ENCODE measurements at regions of chr19 and their contacts with region 1.

Region 1: DNA sequence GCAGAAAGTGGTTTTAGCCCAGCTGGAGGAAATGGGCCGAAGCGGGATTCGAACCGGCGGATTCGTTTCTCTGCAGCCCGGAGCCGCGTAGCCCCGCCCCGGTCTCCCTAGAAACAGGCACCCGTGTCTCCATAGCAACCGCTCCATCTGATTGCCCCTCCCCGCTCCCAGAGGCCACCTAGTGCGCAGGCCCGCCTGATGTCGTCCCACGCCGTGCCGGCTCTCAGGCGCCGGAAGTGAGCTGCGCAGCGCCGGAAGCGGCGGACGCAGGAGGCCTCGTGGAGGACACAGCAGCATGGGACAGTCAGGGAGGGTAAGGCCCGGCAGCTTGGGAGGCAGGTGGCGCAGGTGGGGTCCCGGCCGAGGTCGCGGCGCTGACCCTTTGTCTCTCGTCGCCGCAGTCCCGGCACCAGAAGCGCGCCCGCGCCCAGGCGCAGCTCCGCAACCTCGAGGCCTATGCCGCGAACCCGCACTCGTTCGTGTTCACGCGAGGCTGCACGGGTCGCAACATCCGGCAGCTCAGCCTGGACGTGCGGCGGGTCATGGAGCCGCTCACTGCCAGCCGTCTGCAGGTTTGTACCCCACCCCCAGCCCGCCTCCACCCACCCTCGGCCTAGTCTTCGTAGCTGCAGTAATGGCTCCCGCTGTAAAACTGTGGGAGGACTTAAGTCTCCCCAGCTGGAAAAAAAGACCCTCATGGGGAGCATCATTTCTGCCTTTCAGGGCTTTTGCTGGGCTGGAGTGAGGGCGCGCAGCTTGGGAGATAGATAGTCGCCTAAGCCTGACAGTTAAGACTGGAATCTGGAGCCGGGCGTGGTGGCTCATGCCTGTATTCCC is at the start of gene PPAN:
- DNase-seq: peak; percentile 98
- ATAC-seq: peak; percentile 60
- H3K4me3 ChIP-seq: peak within 1 kb of the TSS; percentile 4 to 71 (median 69)
- H3K4me3 Mint-ChIP-seq: peak within 1 kb of the TSS; percentile 92
- H3K27ac ChIP-seq: peak within 1 kb of the TSS; percentile 97 to 99
- H3K27ac Mint-ChIP-seq: peak within 1 kb of the TSS; percentile 99
- H3K4me1 ChIP-seq: peaks cover 53 to 73% of the 10 kb centered on the region in 2 donors
- H3K4me1 Mint-ChIP-seq: peaks cover 58% of the 10 kb centered on the region
- H3K27me3 ChIP-seq: no peaks in the 10 kb centered on the region
- H3K27me3 Mint-ChIP-seq: no peaks in the 10 kb centered on the region
- CTCF ChIP-seq: no peak
- total RNA-seq, gene PPAN: 80.5 and 88.0 TPM in 2 replicates

Region 2: GRCh38 chr19:10010247-10010691 is 96.0 kb before region 1 on chr19 and contains the start of gene COL5A3:
- CTCF ChIA-PET with region 1: no interaction called
- POLR2A ChIA-PET with region 1: no interaction called
- intact Hi-C with region 1: no loop called
- DNase-seq: no peak
- ATAC-seq: no peak
- H3K4me3 ChIP-seq: no peak within 1 kb of the TSS
- H3K4me3 Mint-ChIP-seq: peak within 1 kb of the TSS; percentile 3
- H3K27ac ChIP-seq: no peak within 1 kb of the TSS
- H3K27ac Mint-ChIP-seq: peak within 1 kb of the TSS; percentile 3
- H3K4me1 ChIP-seq: peaks cover 0 to 9% of the 10 kb centered on the region in 2 donors
- H3K4me1 Mint-ChIP-seq: peaks cover 4% of the 10 kb centered on the region
- H3K27me3 ChIP-seq: peaks cover 0 to 66% (median 16%) of the 10 kb centered on the region in 4 experiments
- H3K27me3 Mint-ChIP-seq: peaks cover 59% of the 10 kb centered on the region
- CTCF ChIP-seq: no peak
- total RNA-seq, gene COL5A3: not detected in 2 replicates

Region 3: GRCh38 chr19:10085641-10086590 is 20.4 kb before region 1 on chr19 and contains the start of gene SHFL:
- CTCF ChIA-PET with region 1: no interaction called
- POLR2A ChIA-PET with region 1: interaction called, 8 read pairs
- intact Hi-C with region 1: loop called (anchors 1 kb)
- DNase-seq: peak; percentile 91
- ATAC-seq: peak; percentile 97
- H3K4me3 ChIP-seq: peak within 1 kb of the TSS; percentile 50 to 99 (median 96)
- H3K4me3 Mint-ChIP-seq: peak within 1 kb of the TSS; percentile 89
- H3K27ac ChIP-seq: peak within 1 kb of the TSS; percentile 70 to 80
- H3K27ac Mint-ChIP-seq: peak within 1 kb of the TSS; percentile 82
- H3K4me1 ChIP-seq: peaks cover 6 to 16% of the 10 kb centered on the region in 2 donors
- H3K4me1 Mint-ChIP-seq: peaks cover 16% of the 10 kb centered on the region
- H3K27me3 ChIP-seq: no peaks in the 10 kb centered on the region
- H3K27me3 Mint-ChIP-seq: no peaks in the 10 kb centered on the region
- CTCF ChIP-seq: no peak
- total RNA-seq, gene SHFL: 95.8 and 109 TPM in 2 replicates

Region 4: DNA sequence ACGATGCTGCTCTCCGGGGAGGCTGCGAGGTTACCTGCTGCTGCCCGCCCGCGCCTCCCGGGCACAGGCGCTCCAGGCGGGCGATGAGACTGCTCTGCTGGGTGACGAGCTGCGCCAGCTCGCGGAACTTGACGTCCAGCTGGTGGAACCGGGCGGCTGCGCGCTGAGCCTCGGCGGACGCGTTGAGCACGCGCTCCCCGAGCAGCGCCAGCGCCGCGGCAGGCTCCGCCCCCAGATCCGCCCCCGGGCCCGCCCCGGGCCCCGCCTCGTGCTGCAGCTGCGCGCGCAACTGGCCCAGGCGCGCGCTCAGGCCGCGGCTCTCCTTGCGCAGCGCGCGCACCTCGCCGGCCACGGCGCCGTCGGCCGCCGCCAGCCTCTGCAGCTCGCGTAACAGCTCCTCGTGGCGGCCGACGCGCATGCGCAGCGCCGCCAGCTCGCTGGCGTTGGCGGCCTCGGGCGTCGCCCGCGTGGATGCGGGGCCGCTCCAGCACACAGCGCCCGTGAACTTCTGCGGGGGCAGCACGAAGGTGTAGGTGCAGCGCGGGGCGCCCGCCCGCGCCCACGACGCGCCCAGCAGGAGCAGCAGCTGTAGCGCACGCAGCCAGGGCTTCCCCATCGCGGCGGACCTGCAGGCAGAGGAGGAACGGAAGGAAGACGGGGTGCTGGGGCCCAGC is 10.2 kb before region 1 on chr19:
- CTCF ChIA-PET with region 1: interaction called, 263 read pairs
- POLR2A ChIA-PET with region 1: interaction called, 62 read pairs
- intact Hi-C with region 1: loop called (anchors 1 kb)
- DNase-seq: peak; percentile 96
- ATAC-seq: peak; percentile 91
- H3K4me3 ChIP-seq: peak overlapping the region in 4 of 5 experiments; percentile 40 to 55 (median 50)
- H3K4me3 Mint-ChIP-seq: peak overlapping the region; percentile 69
- H3K27ac ChIP-seq: peak overlapping the region; percentile 62 to 74
- H3K27ac Mint-ChIP-seq: peak overlapping the region; percentile 67
- H3K4me1 ChIP-seq: peaks cover 27 to 49% of the 10 kb centered on the region in 2 donors
- H3K4me1 Mint-ChIP-seq: peaks cover 39% of the 10 kb centered on the region
- H3K27me3 ChIP-seq: no peaks in the 10 kb centered on the region
- H3K27me3 Mint-ChIP-seq: no peaks in the 10 kb centered on the region
- CTCF ChIP-seq: no peak

Region 5: GRCh38 chr19:10120538-10121189 is 14.3 kb after region 1 on chr19:
- CTCF ChIA-PET with region 1: interaction called, 263 read pairs
- POLR2A ChIA-PET with region 1: interaction called, 62 read pairs
- intact Hi-C with region 1: loop called (anchors 1 kb)
- DNase-seq: no peak
- ATAC-seq: no peak
- H3K4me3 ChIP-seq: no peak overlapping the region
- H3K4me3 Mint-ChIP-seq: peak overlapping the region; percentile 37
- H3K27ac ChIP-seq: no peak overlapping the region
- H3K27ac Mint-ChIP-seq: no peak overlapping the region
- H3K4me1 ChIP-seq: peaks cover 9 to 19% of the 10 kb centered on the region in 2 donors
- H3K4me1 Mint-ChIP-seq: peaks cover 31% of the 10 kb centered on the region
- H3K27me3 ChIP-seq: no peaks in the 10 kb centered on the region
- H3K27me3 Mint-ChIP-seq: no peaks in the 10 kb centered on the region
- CTCF ChIP-seq: no peak

Region 6: GRCh38 chr19:10206226-10206885 is 100.0 kb after region 1 on chr19:
- CTCF ChIA-PET with region 1: no interaction called
- POLR2A ChIA-PET with region 1: interaction called, 11 read pairs
- intact Hi-C with region 1: no loop called
- DNase-seq: no peak
- ATAC-seq: no peak
- H3K4me3 ChIP-seq: no peak overlapping the region
- H3K4me3 Mint-ChIP-seq: no peak overlapping the region
- H3K27ac ChIP-seq: no peak overlapping the region
- H3K27ac Mint-ChIP-seq: no peak overlapping the region
- H3K4me1 ChIP-seq: no peaks in the 10 kb centered on the region
- H3K4me1 Mint-ChIP-seq: no peaks in the 10 kb centered on the region
- H3K27me3 ChIP-seq: no peaks in the 10 kb centered on the region
- H3K27me3 Mint-ChIP-seq: no peaks in the 10 kb centered on the region
- CTCF ChIP-seq: no peak

Region 7: DNA sequence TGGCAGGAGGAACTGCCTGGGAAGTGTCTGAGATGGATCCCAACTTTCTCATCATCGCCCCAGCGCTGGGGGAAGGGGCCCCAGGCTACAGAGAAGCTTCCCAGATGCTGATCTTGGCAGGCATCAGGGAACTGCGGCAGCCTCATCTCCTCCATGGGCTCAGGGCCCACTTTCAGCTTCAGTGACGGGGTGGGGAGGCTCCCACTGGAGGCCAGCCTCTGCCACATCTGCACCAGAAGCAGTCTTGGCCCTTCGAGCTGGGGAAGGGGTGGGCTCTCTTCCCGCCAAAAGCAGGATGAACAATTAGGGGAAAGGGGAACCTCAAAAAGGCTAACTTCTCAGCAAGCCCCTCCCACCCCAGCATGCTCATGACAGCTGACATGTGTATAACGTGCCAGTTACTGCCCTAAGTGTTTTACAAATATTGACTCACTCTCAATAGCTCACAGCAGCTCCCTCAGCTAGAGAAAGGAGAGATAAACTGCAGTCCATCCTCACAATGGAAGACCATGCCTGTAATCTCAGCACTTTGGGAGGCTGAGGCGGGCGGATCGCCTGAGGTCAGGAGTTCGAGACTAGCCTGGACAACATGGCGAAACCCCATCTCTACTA is 132.0 kb after region 1 on chr19:
- CTCF ChIA-PET with region 1: interaction called, 4 read pairs
- POLR2A ChIA-PET with region 1: interaction called, 11 read pairs
- intact Hi-C with region 1: loop called (anchors 2 kb)
- DNase-seq: peak; percentile 51
- ATAC-seq: no peak
- H3K4me3 ChIP-seq: no peak overlapping the region
- H3K4me3 Mint-ChIP-seq: peak overlapping the region; percentile 29
- H3K27ac ChIP-seq: no peak overlapping the region
- H3K27ac Mint-ChIP-seq: peak overlapping the region; percentile 53
- H3K4me1 ChIP-seq: peaks cover 40 to 63% of the 10 kb centered on the region in 2 donors
- H3K4me1 Mint-ChIP-seq: peaks cover 40% of the 10 kb centered on the region
- H3K27me3 ChIP-seq: no peaks in the 10 kb centered on the region
- H3K27me3 Mint-ChIP-seq: no peaks in the 10 kb centered on the region
- CTCF ChIP-seq: no peak

Region 8: GRCh38 chr19:10245189-10245939 is 139.0 kb after region 1 on chr19:
- CTCF ChIA-PET with region 1: interaction called, 16 read pairs
- POLR2A ChIA-PET with region 1: interaction called, 11 read pairs
- intact Hi-C with region 1: no loop called
- DNase-seq: no peak
- ATAC-seq: peak; percentile 68
- H3K4me3 ChIP-seq: no peak overlapping the region
- H3K4me3 Mint-ChIP-seq: no peak overlapping the region
- H3K27ac ChIP-seq: no peak overlapping the region
- H3K27ac Mint-ChIP-seq: peak overlapping the region; percentile 84
- H3K4me1 ChIP-seq: peaks cover 3 to 13% of the 10 kb centered on the region in 2 donors
- H3K4me1 Mint-ChIP-seq: peaks cover 20% of the 10 kb centered on the region
- H3K27me3 ChIP-seq: no peaks in the 10 kb centered on the region
- H3K27me3 Mint-ChIP-seq: no peaks in the 10 kb centered on the region
- CTCF ChIP-seq: no peak